Activated CD4-positive, alpha-beta T cell treated with anti-CD3 and anti-CD28 coated beads for 36 hours (primary cell): ENCODE measurements at regions of chr6 and their contacts with region 1.

Region 1: DNA sequence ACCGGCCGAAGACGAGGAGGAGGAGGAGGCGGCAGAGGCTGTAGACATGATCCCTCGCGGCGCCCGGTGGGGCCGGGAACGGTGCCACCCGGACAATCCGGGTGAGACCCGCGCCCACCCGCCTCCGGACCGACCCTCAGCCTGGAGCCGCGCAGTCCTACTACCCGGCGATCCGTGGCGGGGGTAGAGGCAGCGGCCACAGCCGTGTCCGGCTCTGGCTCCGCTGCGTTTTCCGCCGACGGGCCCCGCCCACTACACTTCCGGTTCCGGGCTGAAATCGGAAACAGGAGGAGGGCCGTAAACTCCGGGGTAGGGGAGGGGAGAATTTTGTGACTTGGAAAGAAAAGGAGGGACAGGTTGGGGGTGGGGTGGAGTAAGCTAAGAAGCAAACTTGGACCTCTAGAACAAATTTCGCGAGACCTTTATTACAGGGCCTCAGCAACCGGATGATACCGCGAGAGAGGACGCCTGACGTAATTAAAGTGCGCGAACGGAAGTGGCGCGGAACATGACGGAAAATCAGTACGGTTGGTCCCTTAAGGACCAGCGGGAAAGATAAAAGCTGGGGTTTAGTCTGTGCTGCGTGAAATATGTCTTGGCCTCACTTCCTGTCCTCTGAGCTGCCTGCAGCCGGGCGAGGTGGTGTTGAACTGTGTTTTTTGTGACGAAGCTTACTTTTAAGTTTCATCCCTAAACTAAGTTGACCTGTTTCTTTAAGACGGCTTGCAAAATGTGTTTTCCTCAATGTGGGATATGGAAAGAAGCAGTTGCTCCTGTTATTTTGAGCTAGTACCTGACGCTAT is at the start of gene MAP3K7:
- DNase-seq: peak; percentile 95
- ATAC-seq: peak; percentile 93
- H3K4me3 Mint-ChIP-seq: peak within 1 kb of the TSS; percentile 95
- H3K27ac Mint-ChIP-seq: peak within 1 kb of the TSS; percentile 98
- H3K4me1 Mint-ChIP-seq: peaks cover 40% of the 10 kb centered on the region
- H3K27me3 Mint-ChIP-seq: peaks cover 7% of the 10 kb centered on the region
- total RNA-seq, gene MAP3K7: 27.5 to 32.6 TPM

Region 2: DNA sequence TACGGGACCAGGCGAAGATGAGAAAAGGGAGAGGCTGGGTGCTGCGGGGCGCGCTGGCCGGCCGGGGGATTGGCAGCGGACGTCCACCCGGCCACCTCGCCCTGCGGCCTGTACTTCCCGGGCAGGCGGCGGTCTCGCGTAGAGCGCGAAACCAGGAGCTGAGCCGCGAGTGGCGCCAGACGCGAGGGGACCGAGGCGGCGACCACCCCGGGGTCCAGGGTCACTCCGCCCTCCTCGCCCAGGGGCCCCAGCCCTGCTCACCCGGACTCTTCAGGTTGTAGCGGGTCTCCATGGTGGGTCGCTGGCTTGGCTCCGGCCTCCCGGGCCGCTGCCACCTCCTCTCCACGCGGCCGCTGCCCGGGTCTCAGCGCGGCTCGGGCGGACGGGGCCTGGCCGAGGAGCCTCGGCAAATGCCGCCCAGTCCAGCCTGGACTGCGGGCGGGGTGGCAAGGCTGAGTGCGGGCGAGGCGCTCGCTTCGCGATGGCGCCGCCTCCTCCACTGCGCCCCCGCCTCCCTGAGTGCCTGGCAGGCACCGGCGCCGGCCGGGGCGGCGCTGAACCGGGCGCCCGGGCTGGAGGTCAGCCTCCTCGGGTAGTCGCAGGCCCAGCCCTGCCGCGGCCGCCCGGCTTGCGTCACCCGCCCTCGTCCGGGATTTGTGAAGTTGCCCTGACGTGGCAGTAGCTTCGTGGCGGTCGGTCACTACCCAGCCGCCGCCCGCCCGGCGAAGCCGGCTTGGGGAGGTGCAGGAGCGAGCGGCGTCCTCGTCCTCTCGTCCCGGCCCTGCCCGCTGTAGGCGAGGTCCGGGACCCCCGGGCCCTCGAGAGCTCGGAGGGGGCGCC is 1234.5 kb before region 1 on chr6 and contains the start of gene UBE2J1:
- CTCF ChIA-PET with region 1: no interaction called
- POLR2A ChIA-PET with region 1: no interaction called
- intact Hi-C with region 1: loop called in 1 of 2 experiments (anchors 5 kb)
- DNase-seq: peak; percentile 85
- ATAC-seq: peak; percentile 84
- H3K4me3 Mint-ChIP-seq: peak within 1 kb of the TSS; percentile 91
- H3K27ac Mint-ChIP-seq: peak within 1 kb of the TSS; percentile 97
- H3K4me1 Mint-ChIP-seq: peaks cover 74% of the 10 kb centered on the region
- H3K27me3 Mint-ChIP-seq: no peaks in the 10 kb centered on the region
- total RNA-seq, gene UBE2J1: 18.7 to 21.7 TPM

Region 3: DNA sequence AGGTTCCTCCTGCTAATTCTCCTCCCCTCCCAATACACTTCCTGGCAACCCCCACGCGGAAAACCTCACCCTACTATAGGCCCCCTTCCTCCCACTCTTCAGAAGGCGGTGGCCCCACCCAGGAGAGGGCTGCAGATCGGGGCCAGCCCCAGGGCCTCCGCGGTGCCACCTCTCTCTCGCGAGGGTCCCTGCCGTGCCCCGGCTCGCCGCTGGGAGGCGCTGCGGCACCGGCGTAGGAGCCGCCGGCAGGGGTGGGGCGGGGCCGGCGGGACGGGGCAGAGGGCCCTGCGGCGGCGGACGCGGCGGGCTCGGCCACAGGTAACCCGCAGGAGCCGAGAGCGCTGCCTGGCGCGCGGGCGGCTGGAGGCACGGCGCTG is 1154.2 kb before region 1 on chr6 and contains the start of gene ANKRD6:
- CTCF ChIA-PET with region 1: no interaction called
- POLR2A ChIA-PET with region 1: no interaction called
- intact Hi-C with region 1: loop called in 1 of 2 experiments (anchors 10 kb)
- DNase-seq: peak; percentile 90
- ATAC-seq: peak; percentile 96
- H3K4me3 Mint-ChIP-seq: peak within 1 kb of the TSS; percentile 67
- H3K27ac Mint-ChIP-seq: no peak within 1 kb of the TSS
- H3K4me1 Mint-ChIP-seq: peaks cover 19% of the 10 kb centered on the region
- H3K27me3 Mint-ChIP-seq: peaks cover 2% of the 10 kb centered on the region
- total RNA-seq, gene ANKRD6: 2.8 to 2.9 TPM

Region 4: GRCh38 chr6:89819336-89820130 is 767.5 kb before region 1 on chr6 and contains the start of gene MDN1:
- CTCF ChIA-PET with region 1: no interaction called
- POLR2A ChIA-PET with region 1: interaction called, 3 read pairs
- intact Hi-C with region 1: loop called in 1 of 2 experiments (anchors 1 kb)
- DNase-seq: peak; percentile 94
- ATAC-seq: peak; percentile 94
- H3K4me3 Mint-ChIP-seq: peak within 1 kb of the TSS; percentile 81
- H3K27ac Mint-ChIP-seq: peak within 1 kb of the TSS; percentile 96
- H3K4me1 Mint-ChIP-seq: peaks cover 22% of the 10 kb centered on the region
- H3K27me3 Mint-ChIP-seq: no peaks in the 10 kb centered on the region
- total RNA-seq, gene MDN1: 48.6 to 59.5 TPM

Region 5: GRCh38 chr6:90008908-90009501 is 578.0 kb before region 1 on chr6:
- CTCF ChIA-PET with region 1: no interaction called
- POLR2A ChIA-PET with region 1: no interaction called
- intact Hi-C with region 1: loop called in 1 of 2 experiments (anchors 10 kb)
- DNase-seq: peak; percentile 54
- ATAC-seq: peak; percentile 82
- H3K4me3 Mint-ChIP-seq: peak overlapping the region; percentile 18
- H3K27ac Mint-ChIP-seq: peak overlapping the region; percentile 95
- H3K4me1 Mint-ChIP-seq: peaks cover 68% of the 10 kb centered on the region
- H3K27me3 Mint-ChIP-seq: no peaks in the 10 kb centered on the region